ENCODE measurements at regions of chr20 and their contacts with region 1.

Region 1: DNA sequence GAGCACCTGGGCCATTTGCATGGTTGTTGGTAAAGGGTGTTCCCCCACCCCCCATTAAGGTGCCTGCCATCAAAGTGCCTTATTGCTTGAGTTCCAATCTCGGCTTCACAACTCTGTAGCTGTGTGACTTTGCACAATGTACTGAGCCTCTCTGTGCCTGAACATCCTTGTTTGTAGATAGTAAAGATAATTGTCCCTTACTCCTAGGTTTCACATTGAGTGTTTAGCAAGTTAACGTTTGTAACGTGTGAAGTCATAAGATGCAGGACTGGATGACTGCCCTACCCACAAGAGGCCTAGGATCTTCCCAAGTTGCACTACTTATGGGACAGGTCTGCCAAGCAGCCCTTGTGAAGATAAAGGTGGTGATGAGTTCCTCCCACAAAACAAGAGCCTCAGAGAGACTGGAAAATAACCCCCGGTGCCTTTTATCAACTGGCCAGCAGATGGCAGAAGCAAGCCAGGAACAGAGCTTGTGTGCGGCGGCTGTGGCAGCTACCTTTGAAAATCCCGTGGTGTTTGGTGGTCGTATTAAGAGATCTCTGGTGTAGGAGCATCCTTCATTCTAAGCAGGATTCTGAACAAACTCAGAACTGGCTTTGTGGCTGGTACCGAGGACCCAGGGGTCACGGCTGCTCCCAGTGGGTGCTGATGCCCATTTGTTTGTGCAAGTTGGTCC is 99.0 kb downstream of the CDH26 start:
- DNase-seq: peak; percentile 65 to 80
- ATAC-seq: peak; percentile 32 to 73 (median 54)
- H3K4me3 ChIP-seq: peak overlapping the region; percentile 42
- H3K27ac ChIP-seq: peak overlapping the region; percentile 86
- H3K4me1 ChIP-seq: peaks cover 44% of the 10 kb centered on the region
- H3K27me3 ChIP-seq: no peaks in the 10 kb centered on the region
- CTCF ChIP-seq: peak; percentile 89

Region 2: GRCh38 chr20:59940174-59940971 is 116.9 kb before region 1 on chr20 and contains the starts of genes FAM217B and PPP1R3D:
- intact Hi-C with region 1: loop called in 1 of 2 experiments (anchors 5 kb)
- DNase-seq: peak; percentile 97 to 98
- ATAC-seq: peak; percentile 87 to 90 (median 88)
- H3K4me3 ChIP-seq: peak within 1 kb of the TSS; percentile 85
- H3K27ac ChIP-seq: peak within 1 kb of the TSS; percentile 96
- H3K4me1 ChIP-seq: peaks cover 62% of the 10 kb centered on the region
- H3K27me3 ChIP-seq: no peaks in the 10 kb centered on the region
- CTCF ChIP-seq: peak; percentile 19
- total RNA-seq, gene FAM217B: 6.5 to 29.2 (median 6.9) TPM
- total RNA-seq, gene PPP1R3D: 4.6 to 8.8 (median 7.0) TPM

Region 3: GRCh38 chr20:60001108-60001507 is 56.2 kb before region 1 on chr20:
- intact Hi-C with region 1: no loop called
- DNase-seq: no peak
- ATAC-seq: no peak
- H3K4me3 ChIP-seq: no peak overlapping the region
- H3K27ac ChIP-seq: no peak overlapping the region
- H3K4me1 ChIP-seq: no peaks in the 10 kb centered on the region
- H3K27me3 ChIP-seq: no peaks in the 10 kb centered on the region
- CTCF ChIP-seq: no peak

Region 4: GRCh38 chr20:60210779-60211617 is 153.7 kb after region 1 on chr20:
- intact Hi-C with region 1: loop called in 1 of 2 experiments (anchors 5 kb)
- DNase-seq: peak; percentile 60 to 80
- ATAC-seq: peak; percentile 79 to 93 (median 86)
- H3K4me3 ChIP-seq: no peak overlapping the region
- H3K27ac ChIP-seq: no peak overlapping the region
- H3K4me1 ChIP-seq: no peaks in the 10 kb centered on the region
- H3K27me3 ChIP-seq: no peaks in the 10 kb centered on the region
- CTCF ChIP-seq: peak; percentile 88

Region 5: GRCh38 chr20:60453388-60454246 is 396.4 kb after region 1 on chr20:
- intact Hi-C with region 1: loop called in 1 of 2 experiments (anchors 10 kb)
- DNase-seq: no peak
- ATAC-seq: no peak
- H3K4me3 ChIP-seq: no peak overlapping the region
- H3K27ac ChIP-seq: no peak overlapping the region
- H3K4me1 ChIP-seq: no peaks in the 10 kb centered on the region
- H3K27me3 ChIP-seq: no peaks in the 10 kb centered on the region
- CTCF ChIP-seq: no peak

Region 6: DNA sequence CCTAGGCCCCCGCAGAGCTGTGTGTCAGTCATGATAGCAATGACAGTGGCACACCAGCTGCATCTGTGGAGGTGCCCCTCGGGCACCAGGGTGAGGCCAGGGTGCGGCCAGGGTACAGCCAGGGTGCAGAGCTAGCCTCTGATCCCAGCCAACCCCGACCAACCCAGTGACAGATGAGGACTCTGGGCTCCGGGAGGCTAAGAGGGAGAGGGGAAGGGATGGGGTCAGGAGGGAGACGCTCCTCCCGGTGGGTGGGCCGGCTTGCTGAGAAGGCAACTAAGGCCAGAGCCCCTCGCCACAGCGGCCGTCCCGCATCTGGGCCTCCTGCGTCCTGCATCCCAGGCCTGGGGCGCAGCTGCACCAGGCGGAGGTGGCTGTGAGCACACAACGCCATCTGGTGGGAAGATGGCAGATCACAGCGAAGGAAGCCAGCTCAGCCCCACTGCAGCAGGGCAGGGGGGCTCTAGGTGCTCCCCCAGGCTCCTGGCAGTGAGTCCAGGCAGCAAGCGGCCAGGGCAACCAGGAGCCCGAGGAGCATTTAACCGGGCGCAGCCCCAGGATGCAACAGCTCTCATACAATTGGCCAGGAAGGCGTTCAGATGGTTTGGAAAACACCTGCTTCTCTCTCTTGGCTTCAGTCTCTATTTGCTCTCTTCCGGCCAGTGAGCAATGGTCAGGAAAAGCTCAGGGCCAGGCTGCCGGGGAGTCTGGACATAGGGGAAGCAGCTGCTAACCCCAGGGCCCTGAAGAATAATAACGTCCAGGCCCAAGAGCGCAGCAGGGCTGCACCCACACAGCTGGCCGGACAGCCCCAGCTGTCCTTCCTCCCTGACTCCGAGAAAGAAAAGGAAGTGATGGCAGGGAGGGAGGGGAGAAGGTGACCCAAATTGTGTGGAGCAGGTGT is 1839.0 kb after region 1 on chr20:
- intact Hi-C with region 1: loop called (anchors 10 kb)
- DNase-seq: peak in 1 of 2 donors; percentile 57
- ATAC-seq: peak; percentile 59 to 72 (median 64)
- H3K4me3 ChIP-seq: no peak overlapping the region
- H3K27ac ChIP-seq: no peak overlapping the region
- H3K4me1 ChIP-seq: no peaks in the 10 kb centered on the region
- H3K27me3 ChIP-seq: peaks cover 0 to 19% (median 4%) of the 10 kb centered on the region in 3 donors
- CTCF ChIP-seq: peak; percentile 69

Measured in psoas muscle (tissue), 8 donors.